ENCODE measurements at regions of chr2 and their contacts with region 1.

Region 1: GRCh38 chr2:219155054-219155644 is 5.5 kb downstream of the NHEJ1 start:
- DNase-seq: peak; percentile 73
- H3K4me3 ChIP-seq: no peak overlapping the region
- H3K27ac ChIP-seq: no peak overlapping the region
- H3K4me1 ChIP-seq: peaks cover 0 to 5% of the 10 kb centered on the region in 2 experiments; a peak in 1 of 4 replicates
- H3K27me3 ChIP-seq: no peaks in the 10 kb centered on the region
- CTCF ChIP-seq: peak; percentile 67
- EP300 ChIP-seq: no peak
- RAD21 ChIP-seq: peak; percentile 90

Region 2: DNA sequence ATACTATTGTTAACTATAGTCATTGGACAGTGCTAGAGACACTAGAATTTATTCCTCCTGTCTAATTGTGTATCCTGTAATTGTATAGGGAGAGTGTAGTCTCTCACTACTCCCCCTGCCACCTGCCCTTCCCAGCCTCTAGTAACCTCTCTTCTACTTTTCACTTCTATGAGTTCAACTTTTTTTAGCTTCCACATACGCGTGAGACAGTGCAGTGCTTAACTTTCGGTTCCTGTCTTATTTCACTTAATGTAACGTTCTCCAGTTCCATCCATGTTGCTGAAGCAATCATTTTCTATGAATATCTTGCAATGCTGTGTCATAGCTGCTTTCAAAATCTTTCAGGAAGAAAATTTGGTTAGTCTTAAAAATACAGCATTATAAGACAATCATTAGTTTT is 1108.9 kb before region 1 on chr2:
- CTCF ChIA-PET with region 1: no interaction called
- POLR2A ChIA-PET with region 1: no interaction called
- DNase-seq: no peak
- H3K4me3 ChIP-seq: no peak overlapping the region
- H3K27ac ChIP-seq: no peak overlapping the region
- H3K4me1 ChIP-seq: no peaks in the 10 kb centered on the region
- H3K27me3 ChIP-seq: no peaks in the 10 kb centered on the region
- CTCF ChIP-seq: no peak
- EP300 ChIP-seq: no peak
- RAD21 ChIP-seq: no peak

Region 3: GRCh38 chr2:218312267-218312756 is 842.8 kb before region 1 on chr2:
- CTCF ChIA-PET with region 1: no interaction called
- POLR2A ChIA-PET with region 1: no interaction called
- DNase-seq: no peak
- H3K4me3 ChIP-seq: no peak overlapping the region
- H3K27ac ChIP-seq: no peak overlapping the region
- H3K4me1 ChIP-seq: no peaks in the 10 kb centered on the region
- H3K27me3 ChIP-seq: no peaks in the 10 kb centered on the region
- CTCF ChIP-seq: no peak
- EP300 ChIP-seq: no peak
- RAD21 ChIP-seq: no peak

Region 4: GRCh38 chr2:218898109-218898878 is 256.9 kb before region 1 on chr2:
- CTCF ChIA-PET with region 1: interaction called, 10 read pairs
- POLR2A ChIA-PET with region 1: no interaction called
- DNase-seq: peak; percentile 94
- H3K4me3 ChIP-seq: peak overlapping the region; percentile 25 to 33; a peak in 2 of 4 replicates
- H3K27ac ChIP-seq: no peak overlapping the region
- H3K4me1 ChIP-seq: peaks cover 0 to 25% of the 10 kb centered on the region in 2 experiments; a peak in 1 of 4 replicates
- H3K27me3 ChIP-seq: peaks cover 46% of the 10 kb centered on the region
- CTCF ChIP-seq: peak; percentile 92
- EP300 ChIP-seq: no peak
- RAD21 ChIP-seq: peak; percentile 81

Region 5: GRCh38 chr2:219073413-219074129 is 81.6 kb before region 1 on chr2:
- CTCF ChIA-PET with region 1: interaction called, 25 read pairs
- POLR2A ChIA-PET with region 1: no interaction called
- DNase-seq: peak; percentile 68
- H3K4me3 ChIP-seq: no peak overlapping the region
- H3K27ac ChIP-seq: no peak overlapping the region
- H3K4me1 ChIP-seq: no peaks in the 10 kb centered on the region
- H3K27me3 ChIP-seq: no peaks in the 10 kb centered on the region
- CTCF ChIP-seq: peak; percentile 63
- EP300 ChIP-seq: no peak
- RAD21 ChIP-seq: peak; percentile 59

Region 6: DNA sequence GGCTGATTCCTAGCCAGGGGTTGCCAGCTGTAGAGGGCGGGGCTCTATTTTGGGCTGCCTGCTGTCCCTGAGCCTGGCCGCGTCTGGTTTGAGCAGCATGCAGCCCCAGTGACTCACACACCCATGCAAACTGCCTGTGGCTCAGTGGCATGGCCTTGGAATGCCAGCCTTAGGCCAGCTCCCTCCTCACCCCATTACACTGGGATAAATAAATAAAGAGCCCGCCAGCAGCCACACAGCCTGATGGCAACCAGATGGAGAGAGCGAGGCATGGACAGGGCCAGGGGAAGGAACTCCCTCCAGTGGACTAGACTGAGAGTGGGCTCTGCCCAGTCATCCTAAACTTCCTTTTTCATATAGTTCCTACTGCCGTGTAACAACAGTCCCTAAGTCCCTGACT is 12.8 kb before region 1 on chr2:
- CTCF ChIA-PET with region 1: interaction called, 14 read pairs
- POLR2A ChIA-PET with region 1: no interaction called
- DNase-seq: peak; percentile 48
- H3K4me3 ChIP-seq: no peak overlapping the region
- H3K27ac ChIP-seq: peak overlapping the region in 1 of 2 experiments; percentile 19; a peak in 2 of 4 replicates
- H3K4me1 ChIP-seq: peaks cover 8 to 10% of the 10 kb centered on the region in 2 experiments; a peak in 1 of 4 replicates
- H3K27me3 ChIP-seq: no peaks in the 10 kb centered on the region
- CTCF ChIP-seq: peak; percentile 38; the same call in 1 of the 2 replicates
- EP300 ChIP-seq: no peak
- RAD21 ChIP-seq: no peak

Region 7: DNA sequence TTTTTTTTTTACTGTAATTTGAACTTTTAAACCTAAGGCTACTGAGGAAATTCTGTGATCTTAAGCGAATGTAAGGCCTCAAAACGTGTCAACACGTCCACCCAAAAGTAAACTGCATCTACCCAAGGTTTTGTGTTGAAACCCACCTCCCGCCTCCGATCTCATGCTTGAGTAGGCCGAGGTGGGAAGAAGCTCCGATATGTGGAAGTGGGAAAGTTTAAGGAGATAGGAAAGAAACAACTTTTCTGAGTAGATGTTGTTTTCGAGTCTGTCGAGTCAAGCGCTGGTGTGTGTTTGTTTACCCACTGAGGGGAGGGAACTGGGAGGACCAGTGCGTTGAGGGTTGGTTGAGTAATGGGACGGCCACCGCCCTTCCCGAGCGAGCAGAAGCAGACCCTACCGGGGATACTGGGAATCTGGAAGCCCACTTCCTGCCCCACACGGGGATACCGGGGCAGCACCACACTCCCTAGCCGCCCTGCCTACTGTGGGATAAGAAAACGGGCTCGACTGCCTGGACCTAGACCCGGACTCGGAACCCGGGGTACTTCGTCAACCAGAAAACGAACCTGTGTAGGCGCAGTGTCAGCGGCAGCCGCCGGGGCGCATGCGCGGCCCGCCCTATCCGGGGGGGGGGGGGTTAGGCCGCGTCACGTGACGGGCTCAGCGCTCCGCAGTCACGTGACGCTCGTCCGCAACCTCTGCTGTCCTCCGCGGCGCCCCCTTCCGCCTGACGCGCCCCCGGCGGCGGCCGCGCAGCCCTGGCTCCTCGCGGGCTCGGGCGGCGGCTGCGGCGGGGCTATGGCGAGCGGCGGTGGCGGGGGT is 22.6 kb after region 1 on chr2 and contains the start of gene RETREG2:
- CTCF ChIA-PET with region 1: interaction called, 104 read pairs
- POLR2A ChIA-PET with region 1: no interaction called
- DNase-seq: peak; percentile 99
- H3K4me3 ChIP-seq: peak within 1 kb of the TSS; percentile 80 to 89
- H3K27ac ChIP-seq: peak within 1 kb of the TSS; percentile 95 to 97
- H3K4me1 ChIP-seq: peaks cover 0 to 17% of the 10 kb centered on the region in 2 experiments; a peak in 2 of 4 replicates
- H3K27me3 ChIP-seq: no peaks in the 10 kb centered on the region
- CTCF ChIP-seq: peak; percentile 39
- EP300 ChIP-seq: 0 out of 4 replicates have a peak, but pooled peaks have one; percentile 12 to 21
- RAD21 ChIP-seq: no peak
- polyA plus RNA-seq, gene RETREG2: 74.6 and 94.8 TPM in 2 replicates

Region 8: DNA sequence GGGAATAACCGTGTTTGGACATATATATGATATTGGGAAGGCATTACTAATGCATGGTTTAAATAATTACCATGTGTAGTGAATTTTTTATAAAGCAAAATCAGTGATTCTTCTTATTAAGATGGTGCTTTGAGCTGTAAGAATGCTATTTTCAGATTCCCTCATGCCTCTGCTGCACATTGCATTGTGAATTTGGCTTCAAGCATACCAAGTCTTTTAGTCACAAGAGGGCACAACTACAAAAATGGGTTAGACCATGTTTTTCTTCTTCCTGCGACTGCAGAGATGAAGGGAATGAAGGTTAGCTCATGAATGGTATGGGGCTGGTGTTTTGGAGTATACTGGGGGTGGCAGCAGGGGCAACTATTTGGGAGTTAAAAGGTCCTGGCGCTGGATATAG is 792.4 kb after region 1 on chr2:
- CTCF ChIA-PET with region 1: no interaction called
- POLR2A ChIA-PET with region 1: no interaction called
- DNase-seq: no peak
- H3K4me3 ChIP-seq: no peak overlapping the region
- H3K27ac ChIP-seq: no peak overlapping the region
- H3K4me1 ChIP-seq: no peaks in the 10 kb centered on the region
- H3K27me3 ChIP-seq: no peaks in the 10 kb centered on the region; the same call in 1 of the 2 replicates
- CTCF ChIP-seq: no peak
- EP300 ChIP-seq: no peak
- RAD21 ChIP-seq: no peak